Activated CD4-positive, alpha-beta T cell treated with anti-CD3 and anti-CD28 coated beads, Interleukin-2, amount 10 ng/mL, durations not matched to agents 24 days and 14 days (primary cell): ENCODE measurements at regions of chr10 and their contacts with region 1.

Region 1: DNA sequence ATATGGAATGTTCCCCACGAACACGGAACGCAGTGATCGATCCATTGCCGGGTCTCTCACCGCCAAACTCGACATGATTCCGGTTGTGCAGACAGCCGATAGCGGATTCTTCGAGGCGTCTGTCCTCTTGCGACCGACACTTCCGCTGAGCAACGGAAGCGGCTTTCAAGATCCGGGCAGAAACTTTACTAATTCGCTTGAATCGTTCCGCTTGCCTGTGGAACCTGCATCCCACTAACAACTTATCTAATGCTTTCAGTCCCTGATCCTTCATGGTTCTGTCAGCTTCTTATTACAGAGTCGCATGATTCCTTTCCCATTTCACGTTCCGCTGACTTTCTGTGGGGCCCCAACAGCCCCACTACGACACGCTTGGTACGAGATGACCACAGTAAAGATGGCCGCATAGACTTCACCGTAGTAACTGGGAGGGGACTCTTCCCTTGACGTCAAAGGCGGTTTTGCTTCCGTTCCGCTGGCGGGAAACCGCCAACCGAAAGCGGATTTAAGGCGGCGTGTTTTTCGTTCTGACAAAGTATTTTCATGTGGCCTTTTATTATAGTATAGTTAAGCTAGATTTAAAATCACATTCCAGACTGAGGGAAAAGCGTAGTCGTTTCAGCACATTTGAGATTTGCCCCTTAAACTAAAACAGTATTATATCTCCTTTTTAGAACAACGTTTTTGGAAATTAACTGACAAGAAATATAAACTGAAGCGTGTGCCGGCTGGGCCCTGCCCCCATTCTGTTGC is at the start of gene CSTF2T:
- DNase-seq: peak; percentile 98
- H3K4me3 Mint-ChIP-seq: peak within 1 kb of the TSS; percentile 99
- H3K27ac Mint-ChIP-seq: peak within 1 kb of the TSS; percentile 100
- H3K4me1 Mint-ChIP-seq: peaks cover 45% of the 10 kb centered on the region
- H3K27me3 Mint-ChIP-seq: no peaks in the 10 kb centered on the region
- total RNA-seq, gene CSTF2T: 36.2 and 36.5 TPM in 2 replicates

Region 2: GRCh38 chr10:51832652-51833383 is 133.2 kb after region 1 on chr10:
- intact Hi-C with region 1: loop called (anchors 2 kb)
- DNase-seq: no peak
- H3K4me3 Mint-ChIP-seq: no peak overlapping the region
- H3K27ac Mint-ChIP-seq: no peak overlapping the region
- H3K4me1 Mint-ChIP-seq: peaks cover 3% of the 10 kb centered on the region
- H3K27me3 Mint-ChIP-seq: peaks cover 4% of the 10 kb centered on the region

Region 3: DNA sequence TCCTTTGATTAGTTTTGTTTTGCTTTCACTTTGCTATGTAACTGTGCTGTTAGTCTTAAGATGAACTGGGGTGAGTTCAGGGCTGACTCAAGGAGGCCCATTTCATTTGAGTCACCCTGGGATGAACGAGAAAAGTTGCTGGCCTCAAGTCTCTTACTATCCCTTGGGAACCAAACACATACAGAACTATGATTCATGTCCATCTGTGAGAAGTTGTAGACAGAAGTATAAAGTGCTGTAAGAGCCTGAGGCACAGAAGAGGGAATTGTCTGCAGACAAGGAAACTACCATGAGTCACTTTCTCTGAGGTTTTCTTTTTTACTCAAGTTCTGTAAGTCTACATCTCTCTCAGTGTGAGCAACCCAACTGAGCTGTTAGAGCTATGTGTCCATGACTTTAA is 179.6 kb after region 1 on chr10:
- intact Hi-C with region 1: loop called (anchors 1 kb)
- DNase-seq: peak; percentile 76
- H3K4me3 Mint-ChIP-seq: peak overlapping the region; percentile 65
- H3K27ac Mint-ChIP-seq: peak overlapping the region; percentile 78
- H3K4me1 Mint-ChIP-seq: peaks cover 11% of the 10 kb centered on the region
- H3K27me3 Mint-ChIP-seq: peaks cover 8% of the 10 kb centered on the region

Region 4: GRCh38 chr10:52040486-52040885 is 340.8 kb after region 1 on chr10:
- intact Hi-C with region 1: no loop called
- DNase-seq: no peak
- H3K4me3 Mint-ChIP-seq: no peak overlapping the region
- H3K27ac Mint-ChIP-seq: no peak overlapping the region
- H3K4me1 Mint-ChIP-seq: no peaks in the 10 kb centered on the region
- H3K27me3 Mint-ChIP-seq: no peaks in the 10 kb centered on the region